A673 (cell line): ENCODE measurements at regions of chr6 and their contacts with region 1.

Region 1: GRCh38 chr6:128952902-128953301 is 70.0 kb downstream of the LAMA2 start:
- DNase-seq: no peak
- H3K4me3 ChIP-seq: no peak overlapping the region
- H3K27ac ChIP-seq: no peak overlapping the region
- H3K4me1 ChIP-seq: peaks cover 4% of the 10 kb centered on the region
- H3K27me3 ChIP-seq: no peaks in the 10 kb centered on the region
- CTCF ChIP-seq: no peak

Region 2: DNA sequence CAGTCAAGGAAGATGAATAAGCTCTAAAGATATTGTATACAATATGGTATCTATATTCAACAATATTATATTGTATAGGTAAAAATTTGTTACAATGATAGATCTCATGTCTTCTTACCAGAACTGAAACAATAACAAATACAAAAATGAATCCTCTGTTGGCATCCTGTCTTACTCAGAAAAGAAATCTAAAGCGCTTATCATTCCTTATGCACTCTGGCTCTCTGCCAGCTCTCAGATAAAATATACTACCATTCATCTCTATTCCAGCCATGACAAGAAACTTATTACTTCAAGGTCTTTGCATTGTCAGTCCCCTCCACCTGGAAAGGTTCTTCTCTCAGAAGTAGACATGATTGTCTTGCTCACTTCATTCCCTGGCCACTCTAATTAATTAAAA is 1190.6 kb before region 1 on chr6:
- CTCF ChIA-PET with region 1: no interaction called
- POLR2A ChIA-PET with region 1: interaction called, 19 read pairs
- intact Hi-C with region 1: no loop called
- DNase-seq: no peak
- H3K4me3 ChIP-seq: no peak overlapping the region
- H3K27ac ChIP-seq: no peak overlapping the region
- H3K4me1 ChIP-seq: no peaks in the 10 kb centered on the region
- H3K27me3 ChIP-seq: no peaks in the 10 kb centered on the region
- CTCF ChIP-seq: no peak

Region 3: GRCh38 chr6:129236001-129236517 is 283.2 kb after region 1 on chr6:
- CTCF ChIA-PET with region 1: no interaction called
- POLR2A ChIA-PET with region 1: no interaction called
- intact Hi-C with region 1: no loop called
- DNase-seq: no peak
- H3K4me3 ChIP-seq: no peak overlapping the region
- H3K27ac ChIP-seq: no peak overlapping the region
- H3K4me1 ChIP-seq: no peaks in the 10 kb centered on the region
- H3K27me3 ChIP-seq: no peaks in the 10 kb centered on the region
- CTCF ChIP-seq: no peak